Body of pancreas (tissue), 4 donors: ENCODE measurements at regions of chr21 and their contacts with region 1.

Region 1: GRCh38 chr21:29372063-29372802 is 73.5 kb downstream of the BACH1 start:
- DNase-seq: peak; percentile 53 to 78 (median 60)
- ATAC-seq: peak; percentile 90
- H3K4me3 ChIP-seq: no peak overlapping the region
- H3K27ac ChIP-seq: no peak overlapping the region
- H3K4me1 ChIP-seq: no peaks in the 10 kb centered on the region
- H3K27me3 ChIP-seq: no peaks in the 10 kb centered on the region
- CTCF ChIP-seq: peak; percentile 40 to 86 (median 79)
- POLR2A ChIP-seq: no peak

Region 2: GRCh38 chr21:29091032-29091431 is 281.2 kb before region 1 on chr21:
- intact Hi-C with region 1: loop called (anchors 5 kb)
- DNase-seq: no peak
- ATAC-seq: no peak
- H3K4me3 ChIP-seq: no peak overlapping the region
- H3K27ac ChIP-seq: no peak overlapping the region
- H3K4me1 ChIP-seq: no peaks in the 10 kb centered on the region
- H3K27me3 ChIP-seq: no peaks in the 10 kb centered on the region
- CTCF ChIP-seq: no peak
- POLR2A ChIP-seq: no peak

Region 3: DNA sequence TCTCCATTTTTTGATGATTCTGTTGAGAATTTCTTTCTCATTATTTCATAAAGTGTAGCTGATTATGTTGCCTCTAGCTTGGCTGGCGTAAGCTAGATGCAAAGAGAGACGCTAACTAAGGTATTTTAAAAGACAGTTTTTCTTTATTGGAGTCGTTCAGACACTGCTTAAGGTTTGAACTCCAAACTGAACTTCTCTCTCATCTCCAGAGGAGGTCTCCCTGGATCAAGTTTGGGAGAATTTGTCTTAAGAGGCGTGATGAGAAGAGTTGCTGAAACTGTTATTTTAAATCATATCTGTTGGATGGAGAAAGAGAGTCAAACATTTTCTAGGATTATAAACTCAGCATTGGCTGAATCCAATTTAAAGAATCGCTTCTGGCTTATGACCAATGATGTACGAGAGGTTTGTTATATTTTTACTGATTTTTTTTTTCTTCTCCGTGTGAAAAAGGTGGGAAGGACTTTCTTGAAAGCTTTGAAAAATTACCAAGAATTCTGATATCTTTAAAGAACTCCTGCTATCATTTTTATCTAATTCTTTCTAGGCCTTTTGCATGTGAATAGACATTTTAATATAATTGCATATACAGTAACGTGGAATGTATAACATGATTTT is 207.8 kb before region 1 on chr21:
- intact Hi-C with region 1: loop called (anchors 5 kb)
- DNase-seq: peak in 1 of 4 donors; percentile 45
- ATAC-seq: peak; percentile 80
- H3K4me3 ChIP-seq: no peak overlapping the region
- H3K27ac ChIP-seq: no peak overlapping the region
- H3K4me1 ChIP-seq: no peaks in the 10 kb centered on the region
- H3K27me3 ChIP-seq: no peaks in the 10 kb centered on the region
- CTCF ChIP-seq: peak; percentile 49 to 86 (median 80)
- POLR2A ChIP-seq: no peak

Region 4: GRCh38 chr21:29299916-29300806 is 72.1 kb before region 1 on chr21:
- intact Hi-C with region 1: no loop called
- DNase-seq: peak; percentile 40 to 73 (median 49)
- ATAC-seq: peak; percentile 28
- H3K4me3 ChIP-seq: peak overlapping the region; percentile 33 to 87
- H3K27ac ChIP-seq: peak overlapping the region; percentile 92 to 98 (median 96)
- H3K4me1 ChIP-seq: peaks cover 53% of the 10 kb centered on the region
- H3K27me3 ChIP-seq: no peaks in the 10 kb centered on the region
- CTCF ChIP-seq: no peak
- POLR2A ChIP-seq: peak in 2 of 3 donors; percentile 16 to 30

Region 5: DNA sequence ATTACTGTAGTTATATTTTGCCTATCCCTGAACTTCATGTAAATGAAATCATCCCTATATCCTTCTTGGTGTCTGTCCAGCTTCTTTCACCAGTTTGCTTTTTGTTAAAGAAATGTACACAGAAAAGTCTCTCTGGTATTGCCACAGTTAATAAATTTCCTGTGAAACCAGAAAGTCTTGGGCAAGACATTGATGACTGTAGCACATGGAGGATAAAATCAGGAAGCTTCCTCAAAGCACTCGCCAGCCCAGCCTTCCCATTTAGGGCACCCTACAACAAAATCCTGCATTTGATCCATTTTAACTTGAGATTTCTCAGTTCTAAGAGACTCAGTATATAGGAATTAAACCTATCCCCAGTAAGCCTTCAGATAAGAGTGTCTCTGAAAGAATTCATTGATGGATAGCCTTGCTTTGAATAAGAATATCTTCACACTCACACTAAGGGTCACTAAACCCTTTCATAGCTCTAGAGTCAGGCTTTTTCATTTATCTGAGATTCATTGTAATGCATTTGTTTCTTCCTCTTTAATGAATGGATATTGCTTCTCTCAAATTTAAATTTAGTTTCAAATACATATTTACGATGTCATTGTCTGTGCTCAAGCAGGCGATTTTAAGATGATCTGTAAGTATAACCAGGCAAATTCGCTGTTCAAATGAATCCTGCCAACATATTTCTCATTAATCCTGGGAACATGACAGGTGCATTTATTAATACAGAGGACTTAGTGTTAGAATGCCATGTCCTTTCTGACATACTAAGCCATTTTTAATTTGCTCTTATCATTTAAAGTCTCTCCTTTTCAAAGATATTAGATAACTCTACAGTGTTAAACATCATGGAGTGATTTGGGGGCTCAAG is 414.5 kb after region 1 on chr21:
- intact Hi-C with region 1: no loop called
- DNase-seq: no peak
- ATAC-seq: peak; percentile 66
- H3K4me3 ChIP-seq: no peak overlapping the region
- H3K27ac ChIP-seq: peak overlapping the region in 3 of 4 donors; percentile 5 to 30 (median 27)
- H3K4me1 ChIP-seq: peaks cover 42% of the 10 kb centered on the region
- H3K27me3 ChIP-seq: no peaks in the 10 kb centered on the region
- CTCF ChIP-seq: no peak
- POLR2A ChIP-seq: no peak